ENCODE measurements at regions of chr1 and their contacts with region 1.

Region 1: DNA sequence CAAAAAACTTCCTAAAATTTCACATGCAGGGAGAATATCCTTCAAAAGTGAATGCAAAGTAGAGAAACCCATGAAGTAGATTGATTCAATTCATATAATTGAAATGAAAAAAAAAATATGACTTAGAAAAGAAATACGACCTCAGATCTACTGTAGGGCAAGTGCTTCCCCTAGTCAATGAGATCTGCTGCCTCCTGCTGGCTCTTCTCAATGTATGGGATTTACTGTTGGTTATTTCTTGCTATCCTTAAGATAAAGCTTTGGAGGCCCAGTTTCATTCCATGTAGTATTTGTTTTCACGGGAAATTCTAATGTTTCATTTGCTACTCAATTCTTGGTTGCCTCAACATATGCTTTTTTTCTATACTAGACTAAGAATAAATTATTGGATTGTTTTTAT is 46.2 kb downstream of the ZNF648 start:
- H3K4me3 ChIP-seq: no peak overlapping the region
- H3K27ac ChIP-seq: no peak overlapping the region
- H3K4me1 ChIP-seq: no peaks in the 10 kb centered on the region
- CTCF ChIP-seq: no peak

Region 2: DNA sequence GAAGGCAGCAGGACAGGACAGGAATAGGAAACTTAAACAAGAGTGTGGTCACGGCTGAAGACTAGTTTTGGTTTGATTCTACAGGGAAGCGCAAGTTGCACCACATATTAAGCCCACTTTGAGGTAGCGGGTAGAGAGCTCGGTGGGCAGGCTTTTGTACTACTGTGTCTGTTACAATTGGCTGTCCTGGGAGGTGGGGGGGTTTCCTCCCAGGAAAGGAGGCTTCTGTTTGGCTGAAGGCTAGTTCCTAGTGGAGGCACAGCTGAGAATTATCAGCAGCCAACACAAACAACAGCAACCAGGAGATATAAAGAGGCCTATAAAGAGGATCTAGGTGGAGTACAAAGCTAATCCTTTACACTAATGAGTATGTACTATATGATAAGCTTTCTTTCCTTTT is 16.5 kb before region 1 on chr1:
- CTCF ChIA-PET with region 1: no interaction called
- POLR2A ChIA-PET with region 1: no interaction called
- H3K4me3 ChIP-seq: no peak overlapping the region
- H3K27ac ChIP-seq: no peak overlapping the region
- H3K4me1 ChIP-seq: no peaks in the 10 kb centered on the region
- CTCF ChIP-seq: no peak

Region 3: DNA sequence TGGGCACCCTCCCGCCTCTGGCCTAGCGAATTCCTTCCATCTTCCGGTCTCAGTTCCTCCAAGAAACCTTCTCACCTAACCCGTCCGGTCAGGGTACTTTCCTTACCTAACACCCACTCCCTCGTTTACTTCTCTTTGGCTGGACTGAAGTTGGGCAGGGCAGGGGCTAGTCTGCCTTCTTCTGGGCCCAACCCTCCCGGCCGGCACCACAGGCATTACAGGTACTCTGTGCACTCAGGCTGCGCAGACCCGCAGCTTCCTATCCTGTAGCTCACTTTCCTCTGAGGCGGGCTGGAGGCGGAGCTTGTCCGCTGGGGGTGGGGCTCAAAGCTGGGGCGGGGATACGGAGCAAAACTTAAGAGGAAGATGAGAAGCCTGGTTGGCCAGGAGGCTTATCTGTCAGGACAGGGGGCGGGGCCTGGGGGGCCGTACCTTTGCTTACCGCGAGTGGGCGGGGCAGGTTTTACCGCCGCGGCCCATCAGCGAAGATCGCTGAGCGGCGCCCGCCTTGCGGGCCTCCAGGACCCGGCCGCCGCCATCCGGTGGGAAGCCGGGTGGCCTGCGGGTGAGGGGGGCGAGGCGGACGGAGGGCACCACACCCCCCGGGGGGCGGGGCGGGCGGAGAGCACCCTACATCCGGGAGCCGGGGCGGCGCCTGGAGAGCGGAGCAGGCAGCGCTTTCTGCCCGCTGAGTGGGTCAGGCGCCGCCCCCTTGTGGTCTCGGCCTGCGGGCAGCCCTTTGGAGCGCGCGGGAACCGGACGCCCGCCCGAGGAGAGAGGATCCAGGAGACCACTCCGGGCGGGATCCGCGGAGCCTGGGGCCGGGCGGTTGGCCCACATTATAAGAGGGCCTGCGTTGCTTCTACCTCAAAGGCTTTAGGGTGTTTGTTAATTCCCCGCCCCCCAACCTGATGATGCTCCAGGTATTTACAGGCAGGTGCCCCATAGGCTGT is 14.3 kb after region 1 on chr1:
- CTCF ChIA-PET with region 1: no interaction called
- POLR2A ChIA-PET with region 1: interaction called, 11 read pairs
- H3K4me3 ChIP-seq: peak overlapping the region; percentile 48
- H3K27ac ChIP-seq: peak overlapping the region; percentile 72
- H3K4me1 ChIP-seq: no peaks in the 10 kb centered on the region
- CTCF ChIP-seq: peak; percentile 82

Measured in HEK293 (cell line).